Head of caudate nucleus (tissue), 42 donors: ENCODE measurements at regions of chr10 and their contacts with region 1.

Region 1: GRCh38 chr10:123582084-123582989 is 83.8 kb upstream of the GPR26 start:
- DNase-seq: peak; percentile 57 to 92 (median 86)

Region 2: DNA sequence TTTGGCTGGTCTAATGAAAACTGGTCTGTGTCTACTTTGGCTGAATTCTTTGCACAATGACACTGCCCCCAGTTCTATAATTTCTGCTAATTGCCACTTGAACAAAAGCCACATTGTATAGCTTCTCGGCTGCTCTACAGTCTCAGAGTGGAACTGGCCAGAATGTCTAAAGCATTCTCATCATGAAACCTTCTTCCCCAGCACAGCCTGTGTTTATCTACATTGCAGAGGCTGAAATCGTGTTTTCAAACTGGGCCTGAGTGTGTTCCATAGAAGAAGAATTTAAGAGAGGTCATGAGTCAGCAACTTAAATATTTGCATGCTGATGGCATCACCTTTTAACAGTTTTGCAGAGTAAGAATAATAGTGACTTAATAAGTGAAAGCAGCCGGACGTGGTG is 250.9 kb before region 1 on chr10:
- intact Hi-C with region 1: no loop called
- DNase-seq: peak in 9 of 42 donors; percentile 10 to 55 (median 21)

Region 3: DNA sequence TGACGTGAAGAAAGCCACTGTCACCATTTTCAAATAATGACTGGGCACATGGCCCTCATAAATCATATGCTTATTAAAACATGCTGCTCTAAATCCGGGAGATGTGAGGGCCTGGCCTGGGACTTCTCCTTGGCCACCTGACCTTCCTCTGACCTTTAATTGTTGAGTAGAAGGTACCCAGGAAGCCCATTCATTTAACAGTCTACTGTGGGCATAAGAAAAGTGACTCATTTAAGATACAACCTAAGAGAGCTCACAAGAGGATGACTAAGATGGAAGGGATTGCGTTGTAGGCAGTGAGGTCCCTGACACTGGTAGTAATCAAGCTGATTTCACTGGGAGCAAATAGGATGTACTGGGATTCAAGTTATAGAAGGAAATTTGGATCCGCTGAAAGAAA is 119.6 kb before region 1 on chr10:
- intact Hi-C with region 1: no loop called
- DNase-seq: no peak

Region 4: GRCh38 chr10:123870260-123870659 is 287.9 kb after region 1 on chr10:
- intact Hi-C with region 1: no loop called
- DNase-seq: peak in 1 of 42 donors; percentile 3

Region 5: DNA sequence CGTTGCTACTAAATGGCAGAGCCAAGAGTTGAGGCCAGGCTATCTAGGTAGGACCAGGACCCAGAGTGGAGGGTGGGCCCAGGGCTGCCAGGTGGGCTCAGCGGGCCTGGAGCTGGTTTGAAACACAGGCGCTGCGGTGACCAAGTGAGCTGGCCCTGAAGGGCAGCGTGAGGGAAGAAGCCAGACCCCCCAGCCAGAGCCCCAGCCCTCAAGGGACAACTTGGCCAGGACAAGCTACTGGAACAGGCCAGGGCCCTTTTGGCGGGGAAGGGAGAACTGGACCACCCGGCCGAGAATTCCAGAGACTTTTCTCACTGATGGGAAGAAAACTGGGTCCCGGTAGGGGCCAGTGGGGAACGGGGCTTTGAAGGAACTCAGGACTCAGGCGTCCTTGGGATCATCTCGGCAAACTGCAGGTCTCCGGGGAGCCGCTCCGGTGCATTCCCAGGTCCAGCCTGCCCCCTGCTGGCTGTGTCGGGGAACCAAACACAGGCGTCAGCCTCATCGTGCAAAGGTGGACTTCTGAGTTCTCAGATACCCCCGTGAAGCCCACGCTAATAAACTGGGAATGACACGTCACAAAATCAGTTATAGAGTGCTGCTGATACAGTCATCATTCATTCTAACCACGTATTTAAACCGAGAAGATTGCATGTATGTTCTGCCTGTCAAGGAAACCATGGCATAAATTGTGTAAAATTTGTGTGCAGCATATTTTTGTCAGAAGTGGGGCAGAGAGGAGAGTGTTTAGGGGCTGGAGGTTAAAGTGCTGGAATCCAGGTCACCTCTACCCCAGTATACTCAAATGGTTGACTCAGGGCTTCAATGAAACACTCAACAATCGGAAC is 385.3 kb after region 1 on chr10:
- intact Hi-C with region 1: loop called (anchors 2 kb)
- DNase-seq: peak; percentile 69 to 92 (median 84)

Region 6: DNA sequence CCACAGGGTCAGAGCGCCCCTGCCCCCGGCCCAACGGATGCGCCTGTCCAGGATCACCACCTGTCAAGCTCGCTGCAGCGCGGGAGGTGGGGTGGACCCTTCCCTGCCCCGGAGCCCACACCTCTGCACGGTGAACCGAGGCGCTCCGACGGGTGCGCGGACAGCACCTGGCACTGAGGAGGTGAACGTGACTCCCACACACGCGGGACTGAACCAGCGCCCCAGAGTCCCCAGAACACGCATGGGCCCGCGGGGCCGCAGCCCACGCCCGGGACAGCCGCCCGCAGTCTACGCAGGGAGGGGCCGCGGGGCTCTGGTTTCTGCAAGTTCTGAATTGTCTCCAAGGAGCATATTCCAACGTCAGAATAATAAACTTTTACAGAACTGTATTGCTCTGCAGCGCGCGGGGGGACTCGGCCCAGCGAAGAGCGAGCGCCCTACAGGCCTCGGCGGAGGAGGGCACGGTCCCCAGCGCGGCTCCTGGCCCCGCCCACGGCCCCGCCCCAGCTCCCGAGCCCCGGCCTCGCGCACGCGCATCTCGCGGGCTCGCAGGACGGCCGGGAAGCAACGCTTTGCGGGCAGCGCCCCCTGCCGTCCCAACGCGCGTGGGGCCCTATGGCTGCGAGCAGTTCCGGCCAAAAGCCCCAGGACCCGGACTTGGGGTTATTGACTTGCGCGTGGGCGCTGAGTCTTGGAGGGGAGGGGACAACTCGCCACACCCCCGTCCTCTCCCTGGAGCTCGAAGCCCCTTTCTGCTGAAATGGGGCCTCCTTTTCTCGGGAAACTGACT is 806.7 kb after region 1 on chr10:
- intact Hi-C with region 1: loop called (anchors 10 kb)
- DNase-seq: peak; percentile 66 to 96 (median 92)